Body of pancreas (tissue), 4 donors: ENCODE measurements at regions of chr1 and their contacts with region 1.

Region 1: GRCh38 chr1:153192697-153193096 is 10.5 kb upstream of the LELP1 start:
- DNase-seq: peak; percentile 20 to 36 (median 28)
- ATAC-seq: peak; percentile 52
- H3K4me3 ChIP-seq: no peak overlapping the region
- H3K27ac ChIP-seq: no peak overlapping the region
- H3K4me1 ChIP-seq: no peaks in the 10 kb centered on the region
- H3K27me3 ChIP-seq: no peaks in the 10 kb centered on the region
- CTCF ChIP-seq: peak in 6 of 7 experiments; percentile 22 to 68 (median 56)
- POLR2A ChIP-seq: no peak

Region 2: GRCh38 chr1:152924191-152924590 is 268.5 kb before region 1 on chr1:
- intact Hi-C with region 1: loop called (anchors 5 kb)
- DNase-seq: no peak
- ATAC-seq: no peak
- H3K4me3 ChIP-seq: no peak overlapping the region
- H3K27ac ChIP-seq: no peak overlapping the region
- H3K4me1 ChIP-seq: no peaks in the 10 kb centered on the region
- H3K27me3 ChIP-seq: no peaks in the 10 kb centered on the region
- CTCF ChIP-seq: no peak
- POLR2A ChIP-seq: no peak

Region 3: GRCh38 chr1:153288634-153289275 is 96.1 kb after region 1 on chr1:
- intact Hi-C with region 1: no loop called
- DNase-seq: peak in 1 of 4 donors; percentile 17
- ATAC-seq: no peak
- H3K4me3 ChIP-seq: no peak overlapping the region
- H3K27ac ChIP-seq: no peak overlapping the region
- H3K4me1 ChIP-seq: no peaks in the 10 kb centered on the region
- H3K27me3 ChIP-seq: no peaks in the 10 kb centered on the region
- CTCF ChIP-seq: peak in 2 of 7 experiments; percentile 14 to 20
- POLR2A ChIP-seq: no peak